Lower leg skin (tissue), 4 donors: ENCODE measurements at regions of chr3 and their contacts with region 1.

Region 1: DNA sequence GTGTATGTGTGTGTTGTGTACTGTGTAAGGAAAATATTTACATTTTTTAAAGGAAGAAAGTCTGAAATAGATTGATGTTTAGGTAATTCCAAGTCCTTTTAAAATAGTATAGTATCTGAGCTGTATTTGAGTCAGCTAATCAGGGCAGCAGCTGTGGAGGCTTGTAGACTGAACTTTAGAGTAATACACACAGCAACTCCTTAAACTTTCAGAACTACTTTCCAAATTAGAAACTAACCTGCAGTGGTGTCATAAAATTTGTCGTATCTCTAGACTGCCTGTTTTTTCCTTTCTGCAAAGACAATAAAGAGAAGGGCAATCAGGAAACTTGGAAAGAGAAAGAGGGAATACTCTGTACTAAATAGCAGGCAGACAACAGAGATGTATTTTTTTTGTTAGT is 391.0 kb upstream of the AZI2 start:
- DNase-seq: no peak
- H3K4me3 ChIP-seq: no peak overlapping the region
- CTCF ChIP-seq: no peak
- POLR2A ChIP-seq: no peak

Region 2: GRCh38 chr3:26799679-26800317 is 1939.8 kb before region 1 on chr3:
- intact Hi-C with region 1: loop called (anchors 5 kb)
- DNase-seq: no peak
- H3K4me3 ChIP-seq: no peak overlapping the region
- CTCF ChIP-seq: no peak
- POLR2A ChIP-seq: no peak

Region 3: DNA sequence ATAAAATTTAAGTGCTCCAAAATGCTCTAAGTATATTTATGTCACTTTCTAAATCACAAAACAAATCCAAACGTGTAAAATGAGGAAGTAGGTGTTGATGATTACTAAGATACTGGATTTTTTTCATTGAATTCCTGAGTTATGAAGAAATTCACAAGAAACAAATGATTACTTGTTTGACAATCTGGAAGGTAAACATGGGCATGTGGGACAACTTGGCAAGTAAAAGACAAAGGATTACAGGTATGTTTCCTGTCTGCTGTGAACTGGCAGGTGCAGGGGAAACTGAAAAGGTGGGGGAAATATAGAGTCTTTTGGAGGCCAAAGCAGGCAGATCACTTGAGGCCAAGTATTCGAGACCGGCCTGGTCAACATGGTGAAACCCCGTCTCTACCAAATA is 138.4 kb before region 1 on chr3:
- intact Hi-C with region 1: no loop called
- DNase-seq: no peak
- H3K4me3 ChIP-seq: no peak overlapping the region
- CTCF ChIP-seq: no peak
- POLR2A ChIP-seq: no peak